IMR-90 (cell line): ENCODE measurements at regions of chr3 and their contacts with region 1.

Region 1: GRCh38 chr3:143674100-143674968 is 173.9 kb downstream of the SLC9A9 start:
- DNase-seq: peak; percentile 57
- ATAC-seq: peak; percentile 96
- H3K4me3 ChIP-seq: no peak overlapping the region
- H3K27ac ChIP-seq: no peak overlapping the region
- H3K4me1 ChIP-seq: no peaks in the 10 kb centered on the region
- H3K27me3 ChIP-seq: no peaks in the 10 kb centered on the region
- CTCF ChIP-seq: peak; percentile 79
- POLR2A ChIP-seq: no peak
- RAD21 ChIP-seq: peak; percentile 80

Region 2: GRCh38 chr3:143070977-143071551 is 603.3 kb before region 1 on chr3:
- CTCF ChIA-PET with region 1: interaction called, 4 read pairs
- POLR2A ChIA-PET with region 1: no interaction called
- dilution Hi-C with region 1: no loop called
- in situ Hi-C with region 1: no loop called
- intact Hi-C with region 1: loop called (anchors 5 kb)
- DNase-seq: peak; percentile 82
- ATAC-seq: peak; percentile 91
- H3K4me3 ChIP-seq: no peak overlapping the region
- H3K27ac ChIP-seq: no peak overlapping the region
- H3K4me1 ChIP-seq: peaks cover 5% of the 10 kb centered on the region
- H3K27me3 ChIP-seq: no peaks in the 10 kb centered on the region; the same call in 1 of the 2 replicates
- CTCF ChIP-seq: peak; percentile 13; the same call in 1 of the 2 replicates
- POLR2A ChIP-seq: no peak
- RAD21 ChIP-seq: 0 out of 2 replicates have a peak, but pooled peaks have one; percentile 0

Region 3: DNA sequence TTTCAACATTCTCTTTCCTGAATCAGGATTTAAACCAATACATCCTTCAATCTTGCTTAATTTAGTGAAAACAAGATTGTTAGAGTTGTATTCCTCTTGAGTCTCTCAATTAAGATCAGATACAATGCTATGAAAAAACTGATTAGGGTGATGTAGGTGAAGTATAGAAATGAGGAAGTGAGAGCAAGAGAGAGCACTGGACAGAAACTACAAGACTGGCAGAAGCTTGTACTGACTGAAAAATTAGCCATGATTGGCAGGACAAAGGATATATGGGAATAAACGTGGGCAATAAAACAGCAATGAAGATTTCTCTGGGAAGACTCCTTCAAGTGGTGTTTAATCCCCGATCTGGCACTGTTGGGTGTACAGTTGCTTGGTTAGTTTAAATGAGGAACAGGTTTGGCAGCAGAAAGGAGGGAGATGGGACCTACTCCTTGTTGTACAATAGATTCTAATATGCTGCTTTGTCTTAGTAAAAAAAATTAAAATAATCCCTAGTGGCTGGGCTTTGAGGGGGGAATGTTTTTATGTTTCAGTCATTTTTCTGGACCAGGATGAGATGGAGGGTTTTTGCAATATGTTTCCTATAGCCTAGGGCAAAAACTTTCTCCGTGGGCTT is 78.8 kb before region 1 on chr3:
- CTCF ChIA-PET with region 1: no interaction called
- POLR2A ChIA-PET with region 1: no interaction called
- dilution Hi-C with region 1: no loop called
- in situ Hi-C with region 1: no loop called
- intact Hi-C with region 1: no loop called
- DNase-seq: no peak
- ATAC-seq: no peak
- H3K4me3 ChIP-seq: no peak overlapping the region
- H3K27ac ChIP-seq: no peak overlapping the region
- H3K4me1 ChIP-seq: no peaks in the 10 kb centered on the region
- H3K27me3 ChIP-seq: no peaks in the 10 kb centered on the region
- CTCF ChIP-seq: no peak
- POLR2A ChIP-seq: no peak
- RAD21 ChIP-seq: no peak